ENCODE measurements at regions of chr10 and their contacts with region 1.

Region 1: GRCh38 chr10:125982260-125982948 is 86.0 kb downstream of the FANK1 start:
- DNase-seq: peak in 1 of 5 donors; percentile 32
- ATAC-seq: peak in 3 of 4 donors; percentile 45 to 72 (median 62)
- H3K4me3 ChIP-seq: no peak overlapping the region
- H3K27ac ChIP-seq: no peak overlapping the region
- H3K4me1 ChIP-seq: no peaks in the 10 kb centered on the region
- H3K27me3 ChIP-seq: no peaks in the 10 kb centered on the region
- CTCF ChIP-seq: peak; percentile 50 to 86 (median 70)
- POLR2A ChIP-seq: no peak

Region 2: GRCh38 chr10:125868372-125868975 is 113.9 kb before region 1 on chr10:
- intact Hi-C with region 1: loop called in 1 of 10 experiments (anchors 10 kb)
- DNase-seq: no peak
- ATAC-seq: peak in 1 of 4 donors; percentile 58
- H3K4me3 ChIP-seq: no peak overlapping the region
- H3K27ac ChIP-seq: no peak overlapping the region
- H3K4me1 ChIP-seq: peaks cover 0 to 5% (median 0%) of the 10 kb centered on the region in 12 donors
- H3K27me3 ChIP-seq: no peaks in the 10 kb centered on the region
- CTCF ChIP-seq: peak; percentile 68 to 84 (median 78)
- POLR2A ChIP-seq: no peak

Region 3: GRCh38 chr10:126049759-126050695 is 67.6 kb after region 1 on chr10:
- intact Hi-C with region 1: no loop called
- DNase-seq: peak in 4 of 5 donors; percentile 53 to 71 (median 57)
- ATAC-seq: peak; percentile 67 to 95 (median 88)
- H3K4me3 ChIP-seq: no peak overlapping the region
- H3K27ac ChIP-seq: peak overlapping the region in 4 of 12 donors; percentile 42 to 72 (median 44)
- H3K4me1 ChIP-seq: peaks cover 0 to 24% (median 14%) of the 10 kb centered on the region in 12 donors
- H3K27me3 ChIP-seq: no peaks in the 10 kb centered on the region
- CTCF ChIP-seq: no peak
- POLR2A ChIP-seq: no peak

Region 4: GRCh38 chr10:126097558-126098225 is 115.3 kb after region 1 on chr10:
- intact Hi-C with region 1: loop called in 2 of 10 experiments (anchors 5 kb)
- DNase-seq: no peak
- ATAC-seq: no peak
- H3K4me3 ChIP-seq: no peak overlapping the region
- H3K27ac ChIP-seq: no peak overlapping the region
- H3K4me1 ChIP-seq: peaks cover 0 to 3% (median 0%) of the 10 kb centered on the region in 12 donors
- H3K27me3 ChIP-seq: no peaks in the 10 kb centered on the region
- CTCF ChIP-seq: peak in 4 of 12 donors; percentile 7 to 32 (median 16)
- POLR2A ChIP-seq: no peak

Region 5: GRCh38 chr10:126387023-126387921 is 404.9 kb after region 1 on chr10:
- intact Hi-C with region 1: loop called in 8 of 10 experiments (anchors 2 to 5 kb)
- DNase-seq: peak; percentile 48 to 79 (median 50)
- ATAC-seq: peak in 3 of 4 donors; percentile 56 to 66 (median 59)
- H3K4me3 ChIP-seq: peak overlapping the region; percentile 23 to 64 (median 48)
- H3K27ac ChIP-seq: peak overlapping the region in 2 of 12 donors; percentile 24 to 59
- H3K4me1 ChIP-seq: peaks cover 0 to 23% (median 7%) of the 10 kb centered on the region in 12 donors
- H3K27me3 ChIP-seq: peaks cover 15 to 53% (median 29%) of the 10 kb centered on the region in 9 donors
- CTCF ChIP-seq: peak; percentile 41 to 86 (median 66)
- POLR2A ChIP-seq: no peak

Region 6: GRCh38 chr10:126749015-126749655 is 766.7 kb after region 1 on chr10:
- intact Hi-C with region 1: loop called (anchors 2 to 10 kb)
- DNase-seq: peak; percentile 42 to 72 (median 62)
- ATAC-seq: peak; percentile 67 to 91 (median 80)
- H3K4me3 ChIP-seq: no peak overlapping the region
- H3K27ac ChIP-seq: no peak overlapping the region
- H3K4me1 ChIP-seq: no peaks in the 10 kb centered on the region
- H3K27me3 ChIP-seq: peaks cover 0 to 2% (median 0%) of the 10 kb centered on the region in 9 donors
- CTCF ChIP-seq: peak; percentile 59 to 78 (median 72)
- POLR2A ChIP-seq: no peak